ENCODE measurements at regions of chr11 and their contacts with region 1.

Region 1: GRCh38 chr11:3014057-3014938 is 22.2 kb upstream of the NAP1L4 start:
- DNase-seq: peak; percentile 61 to 94 (median 85)
- ATAC-seq: peak; percentile 84
- H3K4me3 ChIP-seq: peak overlapping the region; percentile 17 to 27
- H3K4me3 Mint-ChIP-seq: peak overlapping the region; percentile 57
- H3K27ac ChIP-seq: peak overlapping the region; percentile 46 to 62
- H3K27ac Mint-ChIP-seq: peak overlapping the region; percentile 92
- H3K4me1 ChIP-seq: peaks cover 86% of the 10 kb centered on the region
- H3K4me1 Mint-ChIP-seq: peaks cover 74% of the 10 kb centered on the region
- H3K27me3 ChIP-seq: no peaks in the 10 kb centered on the region
- H3K27me3 Mint-ChIP-seq: no peaks in the 10 kb centered on the region
- CTCF ChIP-seq: no peak

Region 2: DNA sequence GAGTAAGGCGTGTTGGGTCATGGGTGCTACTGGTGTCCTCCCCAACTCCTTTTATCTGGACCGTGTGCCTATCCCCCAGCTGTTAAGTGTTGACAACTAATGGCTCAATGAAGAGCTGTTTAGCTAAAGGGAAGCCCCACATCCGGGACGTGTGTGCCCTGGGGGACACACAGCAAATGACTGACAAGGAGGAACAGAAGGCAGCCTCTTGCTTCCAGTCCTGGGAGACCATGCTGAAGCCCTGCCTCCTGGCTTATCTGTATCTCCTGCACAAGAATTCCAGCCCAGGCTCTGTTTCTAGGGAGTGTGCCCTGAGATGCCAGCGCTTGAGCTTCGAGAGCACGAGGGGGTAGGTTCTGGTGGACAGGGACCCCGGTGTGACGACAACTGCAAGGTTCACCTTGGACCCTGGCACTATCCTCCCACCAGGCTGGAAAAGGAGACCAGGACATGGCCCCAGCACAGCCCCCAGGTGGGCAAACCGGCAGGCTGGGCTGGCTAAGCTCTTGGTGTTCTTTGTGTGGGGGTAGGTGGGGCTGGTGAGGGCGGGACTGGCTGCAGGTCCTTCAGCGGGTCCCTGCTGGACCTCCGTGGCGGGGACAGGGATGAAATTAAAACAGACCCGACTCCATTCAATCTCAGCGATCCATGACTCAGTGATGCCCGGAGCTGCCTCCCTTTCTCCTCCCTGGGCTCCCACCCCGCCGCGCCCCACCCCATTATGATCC is 764.9 kb before region 1 on chr11:
- CTCF ChIA-PET with region 1: no interaction called
- POLR2A ChIA-PET with region 1: no interaction called
- intact Hi-C with region 1: no loop called
- DNase-seq: no peak
- ATAC-seq: no peak
- H3K4me3 ChIP-seq: no peak overlapping the region
- H3K4me3 Mint-ChIP-seq: no peak overlapping the region
- H3K27ac ChIP-seq: no peak overlapping the region
- H3K27ac Mint-ChIP-seq: no peak overlapping the region
- H3K4me1 ChIP-seq: no peaks in the 10 kb centered on the region
- H3K4me1 Mint-ChIP-seq: no peaks in the 10 kb centered on the region
- H3K27me3 ChIP-seq: no peaks in the 10 kb centered on the region
- H3K27me3 Mint-ChIP-seq: peaks cover 4% of the 10 kb centered on the region
- CTCF ChIP-seq: no peak

Region 3: DNA sequence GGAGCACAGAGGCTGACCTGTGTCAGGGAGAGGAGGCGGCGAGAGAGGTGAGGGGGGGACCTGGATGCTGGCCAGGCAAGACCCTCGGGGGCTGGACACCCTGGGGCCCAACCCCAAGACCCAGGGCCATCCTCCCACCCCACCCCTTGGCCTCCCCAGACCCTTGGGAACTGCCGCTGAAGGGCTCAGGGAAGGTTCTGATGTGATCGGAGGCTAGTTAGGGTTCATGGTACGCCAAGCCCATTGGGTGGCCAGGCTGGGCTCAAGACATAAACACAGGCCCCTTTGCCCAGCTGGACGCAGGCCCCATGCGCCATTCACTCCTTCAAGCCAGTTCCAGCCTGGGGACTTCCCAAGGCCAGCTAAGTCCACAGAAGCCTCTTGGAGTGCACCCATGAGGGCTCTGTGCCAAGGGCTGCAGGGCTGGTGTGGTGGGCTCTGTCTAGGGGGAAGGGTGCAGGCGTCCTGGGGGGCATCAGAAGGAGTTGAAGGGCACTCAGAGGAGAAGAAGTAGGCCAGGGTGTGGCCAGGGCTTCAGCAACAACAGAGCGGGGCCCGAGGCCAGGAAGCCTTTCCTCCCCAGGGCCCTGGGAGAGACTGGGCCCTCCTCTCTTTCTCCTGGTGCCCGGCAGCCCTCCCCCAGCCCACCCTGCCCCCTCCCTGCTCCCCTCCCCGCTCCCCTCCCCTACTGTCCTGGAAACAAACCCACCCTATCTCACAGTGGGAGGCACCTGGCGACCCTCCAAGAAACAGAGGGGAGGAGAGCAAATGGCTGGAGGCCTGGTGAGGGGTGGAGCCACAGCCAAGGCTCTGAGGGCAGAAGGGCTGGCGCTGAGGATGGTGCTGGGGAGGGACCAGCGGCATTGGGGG is 699.5 kb before region 1 on chr11:
- CTCF ChIA-PET with region 1: no interaction called
- POLR2A ChIA-PET with region 1: no interaction called
- intact Hi-C with region 1: no loop called
- DNase-seq: peak in 1 of 9 experiments; percentile 7
- ATAC-seq: no peak
- H3K4me3 ChIP-seq: no peak overlapping the region
- H3K4me3 Mint-ChIP-seq: no peak overlapping the region
- H3K27ac ChIP-seq: no peak overlapping the region
- H3K27ac Mint-ChIP-seq: peak overlapping the region; percentile 60
- H3K4me1 ChIP-seq: peaks cover 41% of the 10 kb centered on the region
- H3K4me1 Mint-ChIP-seq: peaks cover 25% of the 10 kb centered on the region
- H3K27me3 ChIP-seq: no peaks in the 10 kb centered on the region
- H3K27me3 Mint-ChIP-seq: no peaks in the 10 kb centered on the region
- CTCF ChIP-seq: no peak

Region 4: GRCh38 chr11:2892215-2893020 is 121.9 kb before region 1 on chr11:
- CTCF ChIA-PET with region 1: interaction called, 12 read pairs
- POLR2A ChIA-PET with region 1: no interaction called
- intact Hi-C with region 1: loop called in 1 of 2 experiments (anchors 2 kb)
- DNase-seq: peak in 8 of 9 experiments; percentile 40 to 80 (median 60)
- ATAC-seq: peak; percentile 65
- H3K4me3 ChIP-seq: peak overlapping the region; percentile 48 to 51
- H3K4me3 Mint-ChIP-seq: peak overlapping the region; percentile 68
- H3K27ac ChIP-seq: peak overlapping the region; percentile 31 to 71
- H3K27ac Mint-ChIP-seq: peak overlapping the region; percentile 88
- H3K4me1 ChIP-seq: peaks cover 35% of the 10 kb centered on the region
- H3K4me1 Mint-ChIP-seq: peaks cover 25% of the 10 kb centered on the region
- H3K27me3 ChIP-seq: no peaks in the 10 kb centered on the region
- H3K27me3 Mint-ChIP-seq: no peaks in the 10 kb centered on the region
- CTCF ChIP-seq: peak; percentile 88

Region 5: GRCh38 chr11:2975594-2975993 is 38.7 kb before region 1 on chr11:
- CTCF ChIA-PET with region 1: interaction called, 54 read pairs
- POLR2A ChIA-PET with region 1: interaction called, 10 read pairs
- intact Hi-C with region 1: no loop called
- DNase-seq: peak in 8 of 9 experiments; percentile 21 to 79 (median 62)
- ATAC-seq: peak; percentile 96
- H3K4me3 ChIP-seq: no peak overlapping the region
- H3K4me3 Mint-ChIP-seq: no peak overlapping the region
- H3K27ac ChIP-seq: no peak overlapping the region
- H3K27ac Mint-ChIP-seq: peak overlapping the region; percentile 73
- H3K4me1 ChIP-seq: peaks cover 25% of the 10 kb centered on the region
- H3K4me1 Mint-ChIP-seq: peaks cover 65% of the 10 kb centered on the region
- H3K27me3 ChIP-seq: no peaks in the 10 kb centered on the region
- H3K27me3 Mint-ChIP-seq: no peaks in the 10 kb centered on the region
- CTCF ChIP-seq: peak; percentile 60

Region 6: DNA sequence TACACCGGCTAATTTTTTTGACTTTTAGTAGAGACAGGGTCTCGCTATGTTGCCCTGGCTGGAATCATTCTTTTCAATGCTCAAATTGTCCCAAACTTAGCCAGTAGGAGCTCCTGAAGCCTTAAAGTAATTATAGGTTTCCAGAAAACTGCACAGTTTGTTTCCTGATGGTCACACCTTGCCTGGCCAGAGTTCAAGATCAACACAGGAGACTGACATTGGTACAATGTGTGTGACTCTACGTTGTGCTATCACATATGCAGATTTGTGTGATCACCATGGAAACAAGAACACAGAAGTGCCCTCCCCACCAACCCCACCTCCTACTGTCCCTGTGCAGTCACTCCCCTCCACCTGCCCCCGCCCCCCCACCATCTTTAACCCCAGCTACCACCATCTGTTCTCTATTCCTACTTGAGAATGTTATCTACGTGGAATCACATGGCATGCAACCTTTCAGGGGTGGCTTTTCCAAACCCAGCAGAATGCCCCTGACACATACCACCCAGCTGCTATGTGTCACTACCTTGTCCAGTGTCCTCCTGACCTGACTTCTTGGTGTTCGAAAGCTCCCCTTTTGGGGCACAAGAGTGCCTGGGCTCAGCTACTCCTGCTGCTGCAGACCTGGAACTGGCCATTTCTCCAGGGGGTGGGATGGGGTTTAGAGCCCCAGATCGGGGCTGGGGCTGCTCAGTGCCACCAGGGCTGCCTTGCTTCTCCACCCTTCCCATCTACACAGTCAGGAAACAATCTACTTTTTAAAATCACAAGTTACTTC is 16.0 kb before region 1 on chr11:
- CTCF ChIA-PET with region 1: interaction called, 11 read pairs
- POLR2A ChIA-PET with region 1: interaction called, 11 read pairs
- intact Hi-C with region 1: no loop called
- DNase-seq: no peak
- ATAC-seq: no peak
- H3K4me3 ChIP-seq: no peak overlapping the region
- H3K4me3 Mint-ChIP-seq: no peak overlapping the region
- H3K27ac ChIP-seq: no peak overlapping the region
- H3K27ac Mint-ChIP-seq: no peak overlapping the region
- H3K4me1 ChIP-seq: no peaks in the 10 kb centered on the region
- H3K4me1 Mint-ChIP-seq: peaks cover 8% of the 10 kb centered on the region
- H3K27me3 ChIP-seq: no peaks in the 10 kb centered on the region
- H3K27me3 Mint-ChIP-seq: no peaks in the 10 kb centered on the region
- CTCF ChIP-seq: no peak

Region 7: GRCh38 chr11:3057069-3057963 is 43.0 kb after region 1 on chr11 and contains the start of gene CARS1:
- CTCF ChIA-PET with region 1: interaction called, 4 read pairs
- POLR2A ChIA-PET with region 1: interaction called, 4 read pairs
- intact Hi-C with region 1: loop called (anchors 1 to 2 kb)
- DNase-seq: peak; percentile 79 to 96 (median 92)
- ATAC-seq: peak; percentile 97
- H3K4me3 ChIP-seq: peak within 1 kb of the TSS; percentile 88 to 93
- H3K4me3 Mint-ChIP-seq: peak within 1 kb of the TSS; percentile 87
- H3K27ac ChIP-seq: peak within 1 kb of the TSS; percentile 73 to 76
- H3K27ac Mint-ChIP-seq: peak within 1 kb of the TSS; percentile 79
- H3K4me1 ChIP-seq: peaks cover 17% of the 10 kb centered on the region
- H3K4me1 Mint-ChIP-seq: peaks cover 38% of the 10 kb centered on the region
- H3K27me3 ChIP-seq: no peaks in the 10 kb centered on the region
- H3K27me3 Mint-ChIP-seq: no peaks in the 10 kb centered on the region
- CTCF ChIP-seq: no peak
- total RNA-seq, gene CARS1: 34.2 to 34.7 TPM

Measured in CD8-positive, alpha-beta T cell (primary cell).